Panc1 (cell line): ENCODE measurements at regions of chr17 and their contacts with region 1.

Region 1: DNA sequence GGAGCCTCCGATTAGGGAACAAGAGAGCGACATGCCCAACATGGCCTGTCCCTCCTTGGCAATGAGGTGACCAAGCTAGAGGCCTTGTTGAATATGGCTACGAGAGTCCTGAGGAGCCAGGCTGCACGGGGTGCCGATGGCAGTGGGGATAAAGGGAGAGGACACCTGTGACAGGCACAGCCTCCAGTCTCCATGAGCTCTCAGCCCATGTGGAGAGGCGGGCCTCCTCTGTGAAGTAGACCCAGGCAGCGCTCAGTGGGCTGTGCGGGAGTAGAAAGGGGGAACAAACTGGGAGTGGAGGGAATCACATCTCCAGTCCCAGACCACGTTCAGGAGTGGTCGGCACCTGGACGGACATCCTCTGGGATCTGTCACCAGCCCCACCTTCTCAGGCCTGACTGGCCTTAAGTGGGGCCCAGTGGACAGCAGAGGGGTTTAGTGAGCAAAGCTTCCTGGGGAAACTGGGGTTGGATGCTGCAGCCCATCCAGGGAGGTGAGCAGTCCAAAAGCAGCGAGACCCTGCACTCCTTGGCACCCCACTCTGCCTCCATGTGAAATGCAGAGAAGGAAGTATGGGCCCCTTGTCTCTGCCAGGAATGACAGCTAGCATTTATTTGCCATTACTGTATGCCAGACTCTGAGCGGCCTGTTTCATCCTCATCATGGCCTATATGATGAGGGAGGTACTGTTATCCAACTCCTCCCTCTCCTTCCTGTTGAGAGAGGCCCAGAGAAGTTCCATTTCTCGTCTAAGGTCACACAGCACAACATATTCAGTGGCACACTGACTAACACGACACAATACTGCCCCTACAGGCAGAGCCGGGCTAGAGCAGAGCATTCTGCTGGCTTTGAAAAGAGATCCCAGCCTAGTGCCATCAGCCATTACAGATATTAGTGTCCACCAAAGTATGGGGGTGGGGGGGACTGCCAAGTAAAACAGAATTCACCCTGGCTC is 4.5 kb upstream of the TMEM92 start:
- DNase-seq: peak; percentile 57
- ATAC-seq: peak; percentile 75
- H3K4me3 ChIP-seq: no peak overlapping the region
- H3K27ac ChIP-seq: no peak overlapping the region
- H3K4me1 ChIP-seq: peaks cover 38% of the 10 kb centered on the region
- H3K27me3 ChIP-seq: no peaks in the 10 kb centered on the region
- CTCF ChIP-seq: peak; percentile 93

Region 2: GRCh38 chr17:50345432-50346312 is 75.9 kb after region 1 on chr17 and contains the start of gene XYLT2:
- CTCF ChIA-PET with region 1: no interaction called
- POLR2A ChIA-PET with region 1: no interaction called
- in situ Hi-C with region 1: no loop called
- intact Hi-C with region 1: no loop called
- DNase-seq: no peak
- ATAC-seq: peak; percentile 92
- H3K4me3 ChIP-seq: peak within 1 kb of the TSS; percentile 70 to 85
- H3K27ac ChIP-seq: peak within 1 kb of the TSS; percentile 73
- H3K4me1 ChIP-seq: peaks cover 8% of the 10 kb centered on the region
- H3K27me3 ChIP-seq: no peaks in the 10 kb centered on the region
- CTCF ChIP-seq: no peak
- total RNA-seq, gene XYLT2: 28.5 TPM

Region 3: GRCh38 chr17:50425682-50426471 is 156.1 kb after region 1 on chr17 and contains the start of gene ACSF2:
- CTCF ChIA-PET with region 1: interaction called, 10 read pairs
- POLR2A ChIA-PET with region 1: no interaction called
- in situ Hi-C with region 1: no loop called
- intact Hi-C with region 1: no loop called
- DNase-seq: no peak
- ATAC-seq: peak; percentile 92
- H3K4me3 ChIP-seq: peak within 1 kb of the TSS; percentile 58 to 66
- H3K27ac ChIP-seq: peak within 1 kb of the TSS; percentile 78
- H3K4me1 ChIP-seq: peaks cover 20% of the 10 kb centered on the region
- H3K27me3 ChIP-seq: no peaks in the 10 kb centered on the region
- CTCF ChIP-seq: no peak
- total RNA-seq, gene ACSF2: 17.2 TPM